CD8-positive, alpha-beta T cell (primary cell): ENCODE measurements at regions of chr2 and their contacts with region 1.

Region 1: GRCh38 chr2:37623971-37624900 is 47.2 kb downstream of the CDC42EP3 start:
- DNase-seq: peak in 2 of 9 experiments; percentile 68 to 78
- ATAC-seq: peak; percentile 63
- H3K4me3 ChIP-seq: no peak overlapping the region
- H3K4me3 Mint-ChIP-seq: peak overlapping the region; percentile 60
- H3K27ac ChIP-seq: peak overlapping the region in 1 of 2 experiments; percentile 83
- H3K27ac Mint-ChIP-seq: peak overlapping the region; percentile 95
- H3K4me1 ChIP-seq: peaks cover 50% of the 10 kb centered on the region
- H3K4me1 Mint-ChIP-seq: peaks cover 78% of the 10 kb centered on the region
- H3K27me3 ChIP-seq: no peaks in the 10 kb centered on the region
- H3K27me3 Mint-ChIP-seq: no peaks in the 10 kb centered on the region
- CTCF ChIP-seq: no peak

Region 2: DNA sequence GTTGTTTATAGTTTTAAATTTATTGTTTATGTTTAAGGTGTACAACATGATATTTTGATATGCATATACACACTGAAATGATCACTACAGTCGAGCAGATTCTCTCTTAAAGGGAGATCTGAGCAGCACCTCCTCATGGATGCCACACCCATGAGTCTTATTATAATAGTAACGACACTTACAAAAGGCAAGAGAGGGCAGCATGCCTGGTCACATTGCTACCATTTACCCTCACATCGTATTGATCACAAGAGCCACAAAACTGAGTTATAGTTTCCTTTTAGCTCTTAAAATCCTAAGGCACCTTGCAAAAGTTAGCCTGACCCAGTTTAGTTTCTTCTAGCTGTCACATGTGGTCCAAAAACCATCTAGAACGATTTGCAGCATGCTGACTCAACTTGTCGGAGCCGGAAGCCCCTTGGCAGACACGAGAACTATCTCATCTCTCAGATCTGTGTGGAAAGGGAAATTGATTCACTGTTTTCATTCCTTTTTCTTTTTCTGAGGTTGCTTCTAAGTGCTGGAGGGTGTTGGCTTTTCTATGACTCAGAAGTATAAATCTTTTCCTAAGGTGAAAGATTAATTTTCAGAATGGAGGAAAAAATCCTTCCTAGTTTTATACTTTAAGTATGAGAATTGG is 38.1 kb before region 1 on chr2:
- CTCF ChIA-PET with region 1: interaction called, 4 read pairs
- POLR2A ChIA-PET with region 1: interaction called, 8 read pairs
- intact Hi-C with region 1: loop called in 1 of 2 experiments (anchors 2 kb)
- DNase-seq: peak; percentile 37 to 91 (median 75)
- ATAC-seq: peak; percentile 85
- H3K4me3 ChIP-seq: no peak overlapping the region
- H3K4me3 Mint-ChIP-seq: peak overlapping the region; percentile 42
- H3K27ac ChIP-seq: peak overlapping the region; percentile 2 to 83
- H3K27ac Mint-ChIP-seq: peak overlapping the region; percentile 88
- H3K4me1 ChIP-seq: peaks cover 61% of the 10 kb centered on the region
- H3K4me1 Mint-ChIP-seq: peaks cover 87% of the 10 kb centered on the region
- H3K27me3 ChIP-seq: no peaks in the 10 kb centered on the region
- H3K27me3 Mint-ChIP-seq: no peaks in the 10 kb centered on the region
- CTCF ChIP-seq: no peak

Region 3: GRCh38 chr2:37600735-37601134 is 23.5 kb before region 1 on chr2:
- CTCF ChIA-PET with region 1: interaction called, 7 read pairs
- POLR2A ChIA-PET with region 1: interaction called, 37 read pairs
- intact Hi-C with region 1: no loop called
- DNase-seq: peak in 1 of 9 experiments; percentile 46
- ATAC-seq: no peak
- H3K4me3 ChIP-seq: peak overlapping the region; percentile 42 to 66
- H3K4me3 Mint-ChIP-seq: peak overlapping the region; percentile 90
- H3K27ac ChIP-seq: peak overlapping the region; percentile 65 to 84
- H3K27ac Mint-ChIP-seq: peak overlapping the region; percentile 99
- H3K4me1 ChIP-seq: peaks cover 44% of the 10 kb centered on the region
- H3K4me1 Mint-ChIP-seq: peaks cover 54% of the 10 kb centered on the region
- H3K27me3 ChIP-seq: no peaks in the 10 kb centered on the region
- H3K27me3 Mint-ChIP-seq: no peaks in the 10 kb centered on the region
- CTCF ChIP-seq: no peak

Region 4: GRCh38 chr2:37610638-37611289 is 13.5 kb before region 1 on chr2:
- CTCF ChIA-PET with region 1: interaction called, 3 read pairs
- POLR2A ChIA-PET with region 1: interaction called, 12 read pairs
- intact Hi-C with region 1: loop called in 1 of 2 experiments (anchors 2 kb)
- DNase-seq: no peak
- ATAC-seq: no peak
- H3K4me3 ChIP-seq: no peak overlapping the region
- H3K4me3 Mint-ChIP-seq: no peak overlapping the region
- H3K27ac ChIP-seq: no peak overlapping the region
- H3K27ac Mint-ChIP-seq: peak overlapping the region; percentile 32
- H3K4me1 ChIP-seq: peaks cover 15% of the 10 kb centered on the region
- H3K4me1 Mint-ChIP-seq: peaks cover 24% of the 10 kb centered on the region
- H3K27me3 ChIP-seq: no peaks in the 10 kb centered on the region
- H3K27me3 Mint-ChIP-seq: no peaks in the 10 kb centered on the region
- CTCF ChIP-seq: no peak

Region 5: GRCh38 chr2:37635504-37636380 is 11.5 kb after region 1 on chr2:
- CTCF ChIA-PET with region 1: interaction called, 3 read pairs
- POLR2A ChIA-PET with region 1: interaction called, 18 read pairs
- intact Hi-C with region 1: loop called in 1 of 2 experiments (anchors 1 kb)
- DNase-seq: peak; percentile 29 to 94 (median 68)
- ATAC-seq: peak; percentile 82
- H3K4me3 ChIP-seq: peak overlapping the region in 1 of 2 experiments; percentile 21
- H3K4me3 Mint-ChIP-seq: peak overlapping the region; percentile 32
- H3K27ac ChIP-seq: peak overlapping the region; percentile 50 to 92
- H3K27ac Mint-ChIP-seq: peak overlapping the region; percentile 92
- H3K4me1 ChIP-seq: peaks cover 41% of the 10 kb centered on the region
- H3K4me1 Mint-ChIP-seq: peaks cover 80% of the 10 kb centered on the region
- H3K27me3 ChIP-seq: no peaks in the 10 kb centered on the region
- H3K27me3 Mint-ChIP-seq: no peaks in the 10 kb centered on the region
- CTCF ChIP-seq: no peak

Region 6: GRCh38 chr2:37641582-37642171 is 17.4 kb after region 1 on chr2:
- CTCF ChIA-PET with region 1: interaction called, 4 read pairs
- POLR2A ChIA-PET with region 1: interaction called, 9 read pairs
- intact Hi-C with region 1: loop called in 1 of 2 experiments (anchors 2 kb)
- DNase-seq: no peak
- ATAC-seq: no peak
- H3K4me3 ChIP-seq: no peak overlapping the region
- H3K4me3 Mint-ChIP-seq: no peak overlapping the region
- H3K27ac ChIP-seq: no peak overlapping the region
- H3K27ac Mint-ChIP-seq: peak overlapping the region; percentile 69
- H3K4me1 ChIP-seq: peaks cover 46% of the 10 kb centered on the region
- H3K4me1 Mint-ChIP-seq: peaks cover 86% of the 10 kb centered on the region
- H3K27me3 ChIP-seq: no peaks in the 10 kb centered on the region
- H3K27me3 Mint-ChIP-seq: no peaks in the 10 kb centered on the region
- CTCF ChIP-seq: no peak

Region 7: DNA sequence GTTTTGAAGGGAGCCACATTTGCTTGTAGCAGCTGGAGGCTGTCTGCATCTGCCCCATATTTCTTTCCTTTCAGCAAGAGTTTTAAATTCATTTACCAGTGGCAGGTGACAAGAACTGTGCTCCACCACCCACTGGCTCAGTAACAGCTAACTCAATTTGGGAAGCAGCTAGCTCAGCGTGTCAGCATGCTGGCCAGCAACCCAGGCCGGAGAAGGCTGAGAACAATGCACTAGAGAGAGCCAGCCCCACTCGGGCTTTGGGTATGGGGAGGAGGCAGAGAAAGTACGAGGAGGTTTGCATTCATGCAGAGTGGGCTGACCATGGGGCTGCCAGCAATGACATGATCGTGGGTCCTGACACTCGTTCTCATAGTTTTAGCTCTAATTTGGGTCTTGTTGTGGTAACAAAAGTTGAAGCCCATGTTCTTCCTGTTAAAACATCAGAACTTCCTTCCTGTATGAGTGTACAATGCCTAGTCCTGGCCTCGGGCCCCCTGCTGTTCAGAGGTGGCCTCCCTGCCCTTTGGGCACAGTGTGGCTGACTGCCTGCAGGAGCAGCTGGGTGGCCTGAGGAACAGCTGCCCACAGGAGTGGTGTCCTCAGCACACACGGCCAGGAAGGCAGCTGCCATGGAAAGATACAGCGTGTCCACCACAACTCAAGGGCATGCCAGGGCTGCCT is 24.2 kb after region 1 on chr2:
- CTCF ChIA-PET with region 1: interaction called, 13 read pairs
- POLR2A ChIA-PET with region 1: interaction called, 9 read pairs
- intact Hi-C with region 1: loop called in 1 of 2 experiments (anchors 2 kb)
- DNase-seq: peak in 8 of 9 experiments; percentile 8 to 80 (median 57)
- ATAC-seq: peak; percentile 71
- H3K4me3 ChIP-seq: peak overlapping the region in 1 of 2 experiments; percentile 24
- H3K4me3 Mint-ChIP-seq: peak overlapping the region; percentile 65
- H3K27ac ChIP-seq: peak overlapping the region in 1 of 2 experiments; percentile 68
- H3K27ac Mint-ChIP-seq: peak overlapping the region; percentile 92
- H3K4me1 ChIP-seq: peaks cover 84% of the 10 kb centered on the region
- H3K4me1 Mint-ChIP-seq: peaks cover 92% of the 10 kb centered on the region
- H3K27me3 ChIP-seq: no peaks in the 10 kb centered on the region
- H3K27me3 Mint-ChIP-seq: no peaks in the 10 kb centered on the region
- CTCF ChIP-seq: peak; percentile 24